GM10248 (cell line): ENCODE measurements at regions of chr3 and their contacts with region 1.

Region 1: GRCh38 chr3:119343719-119344118 is 49.5 kb downstream of the ARHGAP31 start:
- DNase-seq: peak; percentile 46
- CTCF ChIP-seq: no peak

Region 2: DNA sequence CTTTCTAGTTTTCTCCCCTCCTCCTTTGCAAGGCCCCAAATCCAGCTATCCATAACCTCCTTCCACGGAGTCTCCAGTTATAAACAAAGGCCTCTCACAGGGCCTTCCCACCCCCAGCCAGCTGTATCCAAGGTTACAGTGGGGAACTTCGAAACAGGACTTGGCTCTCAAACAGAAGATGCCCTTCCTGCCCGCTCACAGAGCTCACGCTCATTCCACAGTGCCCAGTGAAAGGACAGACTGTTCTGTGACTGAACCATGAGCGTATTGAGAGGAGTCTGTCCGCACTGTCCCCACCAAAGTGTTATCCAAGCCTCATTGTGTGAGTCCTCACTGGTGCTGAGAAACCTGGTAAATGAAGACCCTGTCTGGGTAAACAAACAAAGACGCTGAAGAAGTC is 14.2 kb before region 1 on chr3:
- CTCF ChIA-PET with region 1: interaction called, 16 read pairs
- POLR2A ChIA-PET with region 1: no interaction called
- DNase-seq: no peak
- CTCF ChIP-seq: no peak

Region 3: GRCh38 chr3:119360736-119361665 is 17.3 kb after region 1 on chr3:
- CTCF ChIA-PET with region 1: interaction called, 84 read pairs
- POLR2A ChIA-PET with region 1: no interaction called
- DNase-seq: no peak
- CTCF ChIP-seq: no peak

Region 4: DNA sequence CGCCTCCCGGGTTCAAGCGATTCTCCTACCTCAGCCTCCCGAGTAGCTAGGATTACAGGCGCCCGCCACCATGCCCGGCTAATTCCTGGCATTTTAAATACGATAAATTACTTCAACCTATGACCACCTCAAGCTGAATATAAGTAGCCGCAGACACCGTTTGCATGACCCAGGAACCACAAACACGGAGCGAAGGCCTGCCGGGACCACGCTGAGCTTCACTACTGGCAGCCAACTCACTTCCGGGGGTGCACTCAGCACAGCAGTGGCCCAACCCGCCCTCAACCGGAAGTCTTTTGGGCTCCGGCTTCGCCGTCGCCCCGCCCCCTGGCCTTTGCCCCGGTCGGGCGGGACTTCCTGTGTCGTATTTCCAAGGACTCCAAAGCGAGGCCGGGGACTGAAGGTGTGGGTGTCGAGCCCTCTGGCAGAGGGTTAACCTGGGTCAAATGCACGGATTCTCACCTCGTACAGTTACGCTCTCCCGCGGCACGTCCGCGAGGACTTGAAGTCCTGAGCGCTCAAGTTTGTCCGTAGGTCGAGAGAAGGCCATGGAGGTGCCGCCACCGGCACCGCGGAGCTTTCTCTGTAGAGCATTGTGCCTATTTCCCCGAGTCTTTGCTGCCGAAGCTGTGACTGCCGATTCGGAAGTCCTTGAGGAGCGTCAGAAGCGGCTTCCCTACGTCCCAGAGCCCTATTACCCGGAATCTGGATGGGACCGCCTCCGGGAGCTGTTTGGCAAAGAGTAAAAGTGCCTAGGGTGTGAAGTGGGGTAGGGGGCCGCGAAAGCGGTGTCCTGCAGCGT is 154.7 kb after region 1 on chr3 and contains the start of gene TIMMDC1:
- CTCF ChIA-PET with region 1: no interaction called
- POLR2A ChIA-PET with region 1: no interaction called
- DNase-seq: peak; percentile 99
- CTCF ChIP-seq: no peak

Region 5: GRCh38 chr3:119702530-119703157 is 358.9 kb after region 1 on chr3 and contains the start of gene CFAP91:
- CTCF ChIA-PET with region 1: no interaction called
- POLR2A ChIA-PET with region 1: no interaction called
- DNase-seq: peak; percentile 95
- CTCF ChIP-seq: no peak